Activated naive CD4-positive, alpha-beta T cell treated with anti-CD3 and anti-CD28 coated beads for 36 hours (primary cell): ENCODE measurements at regions of chr1 and their contacts with region 1.

Region 1: GRCh38 chr1:202968840-202969295 is 1.8 kb upstream of the CYB5R1 start:
- DNase-seq: peak; percentile 56
- H3K4me3 Mint-ChIP-seq: no peak overlapping the region
- H3K27ac Mint-ChIP-seq: no peak overlapping the region
- H3K4me1 Mint-ChIP-seq: peaks cover 28% of the 10 kb centered on the region
- H3K27me3 Mint-ChIP-seq: no peaks in the 10 kb centered on the region

Region 2: GRCh38 chr1:202888531-202889360 is 80.1 kb before region 1 on chr1 and contains the start of gene RABIF:
- CTCF ChIA-PET with region 1: no interaction called
- intact Hi-C with region 1: loop called (anchors 1 kb)
- DNase-seq: peak; percentile 97
- H3K4me3 Mint-ChIP-seq: peak within 1 kb of the TSS; percentile 94
- H3K27ac Mint-ChIP-seq: peak within 1 kb of the TSS; percentile 96
- H3K4me1 Mint-ChIP-seq: peaks cover 24% of the 10 kb centered on the region
- H3K27me3 Mint-ChIP-seq: no peaks in the 10 kb centered on the region
- total RNA-seq, gene RABIF: 5.9 to 6.2 TPM